ENCODE measurements at regions of chr1 and their contacts with region 1.

Region 1: DNA sequence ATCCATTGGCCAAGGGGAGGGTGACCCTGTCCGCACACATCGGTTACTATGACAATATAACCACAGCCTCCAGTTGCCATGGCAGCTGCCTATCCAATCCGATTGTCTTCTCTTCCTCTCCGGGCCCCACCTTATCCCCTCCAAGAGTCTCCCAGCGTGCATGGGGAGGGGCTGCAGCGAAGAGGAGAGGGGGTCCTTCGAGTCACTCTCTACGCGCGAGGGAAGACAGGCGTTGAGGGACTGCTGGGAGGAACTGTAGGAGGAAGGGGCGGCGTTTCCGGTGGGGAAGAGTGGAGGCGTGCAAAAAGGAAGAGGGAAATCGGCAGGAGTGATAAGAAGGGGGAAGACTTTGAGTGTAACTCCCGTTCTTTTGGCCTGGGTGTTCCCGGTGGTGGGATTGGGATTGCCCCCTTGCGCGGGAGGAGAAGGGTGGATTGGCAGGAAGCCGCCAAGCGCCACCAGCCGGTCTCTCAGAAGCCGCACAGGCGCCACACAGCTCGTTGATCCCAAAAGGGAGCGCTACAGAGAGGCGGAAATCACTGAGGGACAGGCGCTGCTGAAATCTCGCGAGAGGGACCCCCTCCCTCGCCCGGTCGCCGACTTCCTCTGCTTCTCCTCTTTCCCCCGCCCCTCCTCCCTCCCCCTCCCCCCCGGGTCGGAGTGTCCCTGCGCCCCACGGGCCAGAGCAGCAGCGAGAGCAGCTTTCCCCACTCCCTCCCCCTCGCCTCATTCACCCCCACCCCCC is 384 bp upstream of the SMG7 start:
- DNase-seq: peak; percentile 94 to 99 (median 97)
- ATAC-seq: peak; percentile 66
- H3K4me3 ChIP-seq: peak overlapping the region; percentile 78
- H3K4me3 Mint-ChIP-seq: peak overlapping the region; percentile 96
- H3K27ac ChIP-seq: peak overlapping the region; percentile 86 to 96
- H3K27ac Mint-ChIP-seq: peak overlapping the region; percentile 97
- H3K4me1 ChIP-seq: peaks cover 22% of the 10 kb centered on the region
- H3K4me1 Mint-ChIP-seq: peaks cover 37% of the 10 kb centered on the region
- H3K27me3 ChIP-seq: no peaks in the 10 kb centered on the region
- H3K27me3 Mint-ChIP-seq: no peaks in the 10 kb centered on the region
- CTCF ChIP-seq: no peak

Region 2: DNA sequence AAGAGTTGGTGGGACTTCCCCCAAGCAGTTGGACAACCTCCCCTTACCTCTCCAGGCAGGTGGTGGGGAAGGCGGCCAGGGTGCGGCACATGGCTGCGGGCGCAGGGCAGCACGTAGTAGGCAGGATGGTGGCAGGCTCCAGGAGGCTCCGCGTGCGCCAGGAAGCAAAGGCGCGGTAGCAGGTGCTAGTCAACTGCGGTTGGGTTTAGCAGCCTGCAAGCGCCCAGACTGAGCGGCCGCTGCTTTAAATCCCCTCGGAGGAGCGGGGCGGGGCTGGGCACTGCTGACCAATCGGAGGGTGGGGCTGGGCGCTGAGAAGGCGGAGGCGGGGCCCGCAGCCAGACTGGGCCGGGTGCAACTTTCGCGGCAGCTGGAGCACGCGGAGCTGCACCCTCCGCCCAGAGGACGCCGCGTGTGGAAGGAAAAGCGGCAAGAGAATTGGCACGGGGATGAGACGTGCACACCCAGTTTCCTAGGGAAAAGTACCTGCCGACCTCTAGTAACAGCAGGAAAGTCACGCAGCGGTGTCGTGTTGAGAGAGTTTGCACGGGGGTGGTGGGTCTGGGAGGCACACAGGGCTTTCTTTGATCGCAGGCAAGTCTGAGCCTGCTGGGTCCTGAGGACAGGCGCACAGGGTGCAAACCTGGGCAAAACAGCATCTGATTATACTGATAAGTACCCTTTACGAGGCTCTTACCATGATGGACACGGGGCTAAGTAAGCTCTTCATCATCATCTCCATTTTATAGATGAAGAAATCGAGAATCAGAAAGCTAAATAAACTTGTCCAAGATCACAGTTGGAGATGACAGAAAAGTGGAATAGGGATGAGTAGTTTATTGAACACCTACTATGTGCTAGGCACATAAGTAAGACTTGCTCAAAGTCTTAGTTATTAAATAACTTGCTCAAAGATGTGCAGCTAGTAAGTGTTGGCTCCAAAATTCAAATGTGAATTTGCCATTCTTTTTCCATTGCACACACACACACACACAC is 867.4 kb before region 1 on chr1 and contains the start of gene RGS16:
- CTCF ChIA-PET with region 1: no interaction called
- POLR2A ChIA-PET with region 1: no interaction called
- intact Hi-C with region 1: loop called in 1 of 2 experiments (anchors 10 kb)
- DNase-seq: peak; percentile 77 to 96 (median 90)
- ATAC-seq: peak; percentile 88
- H3K4me3 ChIP-seq: peak within 1 kb of the TSS; percentile 58
- H3K4me3 Mint-ChIP-seq: peak within 1 kb of the TSS; percentile 83
- H3K27ac ChIP-seq: no peak within 1 kb of the TSS
- H3K27ac Mint-ChIP-seq: no peak within 1 kb of the TSS
- H3K4me1 ChIP-seq: peaks cover 36% of the 10 kb centered on the region
- H3K4me1 Mint-ChIP-seq: no peaks in the 10 kb centered on the region
- H3K27me3 ChIP-seq: no peaks in the 10 kb centered on the region
- H3K27me3 Mint-ChIP-seq: peaks cover 16% of the 10 kb centered on the region
- CTCF ChIP-seq: no peak
- total RNA-seq, gene RGS16: 16.3 to 16.4 TPM

Region 3: GRCh38 chr1:182839209-182840065 is 632.5 kb before region 1 on chr1 and contains the start of gene DHX9:
- CTCF ChIA-PET with region 1: no interaction called
- POLR2A ChIA-PET with region 1: no interaction called
- intact Hi-C with region 1: loop called in 1 of 2 experiments (anchors 2 kb)
- DNase-seq: peak; percentile 92 to 99 (median 96)
- ATAC-seq: peak; percentile 83
- H3K4me3 ChIP-seq: peak within 1 kb of the TSS; percentile 66
- H3K4me3 Mint-ChIP-seq: peak within 1 kb of the TSS; percentile 92
- H3K27ac ChIP-seq: peak within 1 kb of the TSS; percentile 85 to 87
- H3K27ac Mint-ChIP-seq: peak within 1 kb of the TSS; percentile 90
- H3K4me1 ChIP-seq: peaks cover 26% of the 10 kb centered on the region
- H3K4me1 Mint-ChIP-seq: peaks cover 54% of the 10 kb centered on the region
- H3K27me3 ChIP-seq: no peaks in the 10 kb centered on the region
- H3K27me3 Mint-ChIP-seq: no peaks in the 10 kb centered on the region
- CTCF ChIP-seq: peak; percentile 31
- total RNA-seq, gene DHX9: 338 to 353 TPM

Region 4: GRCh38 chr1:183543619-183544204 is 71.8 kb after region 1 on chr1:
- CTCF ChIA-PET with region 1: no interaction called
- POLR2A ChIA-PET with region 1: no interaction called
- intact Hi-C with region 1: loop called (anchors 1 to 2 kb)
- DNase-seq: peak in 5 of 14 experiments; percentile 13 to 69 (median 62)
- ATAC-seq: peak; percentile 99
- H3K4me3 ChIP-seq: no peak overlapping the region
- H3K4me3 Mint-ChIP-seq: no peak overlapping the region
- H3K27ac ChIP-seq: no peak overlapping the region
- H3K27ac Mint-ChIP-seq: peak overlapping the region; percentile 19
- H3K4me1 ChIP-seq: no peaks in the 10 kb centered on the region
- H3K4me1 Mint-ChIP-seq: peaks cover 6% of the 10 kb centered on the region
- H3K27me3 ChIP-seq: no peaks in the 10 kb centered on the region
- H3K27me3 Mint-ChIP-seq: no peaks in the 10 kb centered on the region
- CTCF ChIP-seq: peak; percentile 57

Region 5: DNA sequence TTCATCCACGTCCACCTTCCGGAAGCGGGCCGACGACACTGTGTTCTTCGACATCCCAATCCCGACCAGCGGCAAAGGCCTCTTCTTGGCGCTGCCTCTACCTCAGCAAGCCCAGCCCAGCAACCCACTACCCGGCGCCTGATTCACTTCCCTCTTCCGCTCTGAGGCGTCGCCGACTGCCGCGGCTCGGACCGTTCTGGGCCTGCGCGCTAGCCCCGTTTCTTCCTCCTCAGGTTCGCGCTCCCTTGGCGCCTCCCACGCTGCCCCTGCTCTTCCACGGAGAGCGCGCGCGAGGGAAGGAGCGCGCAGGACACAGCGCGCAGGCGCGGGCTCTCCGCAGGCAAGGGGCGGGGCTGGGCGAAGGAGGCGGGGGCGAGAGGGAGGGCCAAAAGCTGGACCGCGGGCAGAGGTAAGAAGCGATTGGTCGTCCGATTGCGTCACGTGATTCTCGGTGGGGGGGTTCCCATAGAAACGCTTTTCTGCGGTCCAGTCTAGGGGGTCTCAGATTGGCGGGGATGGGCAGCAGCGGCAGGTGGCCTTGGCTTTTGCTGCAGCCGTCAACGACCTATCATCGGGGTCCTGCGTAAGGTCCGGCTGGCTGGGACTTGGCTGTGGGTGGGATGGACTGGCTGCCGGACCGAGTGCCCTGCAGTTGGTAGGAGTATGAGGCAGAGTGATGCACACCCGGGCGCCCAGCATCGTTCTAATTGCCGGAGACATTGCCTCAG is 163.9 kb after region 1 on chr1 and contains the start of gene ARPC5:
- CTCF ChIA-PET with region 1: no interaction called
- POLR2A ChIA-PET with region 1: interaction called, 12 read pairs
- intact Hi-C with region 1: loop called in 1 of 2 experiments (anchors 2 kb)
- DNase-seq: peak; percentile 91 to 99 (median 94)
- ATAC-seq: peak; percentile 88
- H3K4me3 ChIP-seq: peak within 1 kb of the TSS; percentile 93
- H3K4me3 Mint-ChIP-seq: peak within 1 kb of the TSS; percentile 100
- H3K27ac ChIP-seq: peak within 1 kb of the TSS; percentile 61 to 86
- H3K27ac Mint-ChIP-seq: peak within 1 kb of the TSS; percentile 94
- H3K4me1 ChIP-seq: peaks cover 17% of the 10 kb centered on the region
- H3K4me1 Mint-ChIP-seq: peaks cover 51% of the 10 kb centered on the region
- H3K27me3 ChIP-seq: no peaks in the 10 kb centered on the region
- H3K27me3 Mint-ChIP-seq: no peaks in the 10 kb centered on the region
- CTCF ChIP-seq: no peak
- total RNA-seq, gene ARPC5: 21.4 to 23.0 TPM

Region 6: GRCh38 chr1:183915625-183916510 is 444.0 kb after region 1 on chr1:
- CTCF ChIA-PET with region 1: no interaction called
- POLR2A ChIA-PET with region 1: no interaction called
- intact Hi-C with region 1: loop called (anchors 2 to 5 kb)
- DNase-seq: peak; percentile 43 to 90 (median 60)
- ATAC-seq: peak; percentile 94
- H3K4me3 ChIP-seq: no peak overlapping the region
- H3K4me3 Mint-ChIP-seq: no peak overlapping the region
- H3K27ac ChIP-seq: no peak overlapping the region
- H3K27ac Mint-ChIP-seq: no peak overlapping the region
- H3K4me1 ChIP-seq: peaks cover 9% of the 10 kb centered on the region
- H3K4me1 Mint-ChIP-seq: peaks cover 11% of the 10 kb centered on the region
- H3K27me3 ChIP-seq: no peaks in the 10 kb centered on the region
- H3K27me3 Mint-ChIP-seq: no peaks in the 10 kb centered on the region
- CTCF ChIP-seq: peak; percentile 85

Region 7: GRCh38 chr1:185044981-185045813 is 1573.3 kb after region 1 on chr1 and contains the start of gene RNF2:
- CTCF ChIA-PET with region 1: no interaction called
- POLR2A ChIA-PET with region 1: no interaction called
- intact Hi-C with region 1: loop called in 1 of 2 experiments (anchors 10 kb)
- DNase-seq: peak; percentile 62 to 94 (median 76)
- ATAC-seq: peak; percentile 90
- H3K4me3 ChIP-seq: peak within 1 kb of the TSS; percentile 80
- H3K4me3 Mint-ChIP-seq: peak within 1 kb of the TSS; percentile 94
- H3K27ac ChIP-seq: peak within 1 kb of the TSS; percentile 70 to 72
- H3K27ac Mint-ChIP-seq: peak within 1 kb of the TSS; percentile 77
- H3K4me1 ChIP-seq: peaks cover 13% of the 10 kb centered on the region
- H3K4me1 Mint-ChIP-seq: peaks cover 59% of the 10 kb centered on the region
- H3K27me3 ChIP-seq: no peaks in the 10 kb centered on the region
- H3K27me3 Mint-ChIP-seq: no peaks in the 10 kb centered on the region
- CTCF ChIP-seq: peak; percentile 15
- total RNA-seq, gene RNF2: 7.4 to 9.0 TPM